A549 (cell line): ENCODE measurements at regions of chr5 and their contacts with region 1.

Region 1: GRCh38 chr5:42908509-42909488 is 97.1 kb upstream of the SELENOP start:
- DNase-seq: peak; percentile 83 to 89
- ATAC-seq: peak; percentile 87 to 94
- H3K4me3 ChIP-seq: peak overlapping the region; percentile 42
- H3K27ac ChIP-seq: peak overlapping the region; percentile 32 to 64; a peak in 4 of 6 replicates
- H3K4me1 ChIP-seq: peaks cover 4% of the 10 kb centered on the region; the same call in 1 of the 3 replicates
- CTCF ChIP-seq: peak; percentile 88
- EP300 ChIP-seq: no peak
- POLR2A ChIP-seq: no peak
- RAD21 ChIP-seq: peak; percentile 73 to 80

Region 2: GRCh38 chr5:42791151-42791550 is 117.6 kb before region 1 on chr5:
- CTCF ChIA-PET with region 1: no interaction called
- POLR2A ChIA-PET with region 1: no interaction called
- DNase-seq: no peak
- ATAC-seq: no peak
- H3K4me3 ChIP-seq: no peak overlapping the region
- H3K27ac ChIP-seq: no peak overlapping the region
- H3K4me1 ChIP-seq: no peaks in the 10 kb centered on the region
- CTCF ChIP-seq: no peak
- EP300 ChIP-seq: no peak
- POLR2A ChIP-seq: no peak
- RAD21 ChIP-seq: no peak

Region 3: DNA sequence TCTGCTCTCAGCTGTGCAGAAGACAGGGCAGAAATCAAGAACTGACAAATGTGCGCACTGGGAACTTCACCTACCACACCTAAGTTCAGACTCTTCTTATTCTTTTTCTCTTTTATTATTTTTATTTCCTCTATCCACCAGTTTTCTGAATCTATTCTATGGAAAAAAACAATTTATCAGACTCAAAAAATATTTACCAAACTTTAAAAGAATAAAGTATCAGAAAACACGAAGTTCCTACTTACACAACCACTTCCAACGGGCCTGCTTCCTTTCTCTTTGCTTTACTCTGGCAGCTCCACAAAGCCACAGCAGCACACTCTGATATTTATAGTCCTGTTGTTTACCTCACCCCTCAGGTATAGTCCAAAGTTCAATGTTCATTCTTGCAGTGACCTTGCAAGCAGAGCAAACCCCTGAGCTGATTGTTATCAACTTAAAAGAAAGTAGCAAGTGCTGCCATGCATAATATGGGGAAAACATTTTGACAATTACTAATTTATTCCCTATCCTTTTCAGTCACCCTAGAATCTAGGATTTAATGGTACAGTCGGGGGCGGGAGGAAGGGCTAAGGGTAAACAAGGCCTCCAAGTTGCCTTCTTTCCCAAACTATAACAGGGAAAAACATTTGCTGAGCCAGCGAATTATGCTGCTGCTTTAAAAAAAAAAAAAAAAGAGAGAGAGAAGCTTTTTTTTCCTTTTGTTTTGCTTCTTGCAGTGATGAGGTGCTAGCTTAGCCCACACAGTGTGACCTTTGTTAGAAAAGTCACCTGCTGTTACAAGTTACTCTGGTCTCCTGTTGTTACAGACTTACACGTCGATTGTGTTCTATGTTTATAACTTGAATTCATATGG is 97.0 kb before region 1 on chr5 and contains the start of gene SELENOP:
- CTCF ChIA-PET with region 1: no interaction called
- POLR2A ChIA-PET with region 1: no interaction called
- DNase-seq: peak in 1 of 2 experiments; percentile 23
- ATAC-seq: peak in 1 of 2 experiments; percentile 40; a peak in 3 of 6 replicates
- H3K4me3 ChIP-seq: no peak within 1 kb of the TSS
- H3K27ac ChIP-seq: no peak within 1 kb of the TSS
- H3K4me1 ChIP-seq: no peaks in the 10 kb centered on the region
- CTCF ChIP-seq: no peak
- EP300 ChIP-seq: no peak
- POLR2A ChIP-seq: no peak
- RAD21 ChIP-seq: no peak
- polyA plus RNA-seq, gene SELENOP: 0.96 and 1.0 TPM in 2 replicates

Region 4: GRCh38 chr5:42858031-42858643 is 50.7 kb before region 1 on chr5:
- CTCF ChIA-PET with region 1: no interaction called
- POLR2A ChIA-PET with region 1: no interaction called
- DNase-seq: no peak
- ATAC-seq: no peak
- H3K4me3 ChIP-seq: no peak overlapping the region
- H3K27ac ChIP-seq: no peak overlapping the region
- H3K4me1 ChIP-seq: no peaks in the 10 kb centered on the region
- CTCF ChIP-seq: no peak
- EP300 ChIP-seq: no peak
- POLR2A ChIP-seq: no peak
- RAD21 ChIP-seq: no peak

Region 5: GRCh38 chr5:42889311-42889933 is 19.4 kb before region 1 on chr5:
- CTCF ChIA-PET with region 1: interaction called, 17 read pairs
- POLR2A ChIA-PET with region 1: no interaction called
- DNase-seq: peak; percentile 62 to 79
- ATAC-seq: peak; percentile 95 to 98
- H3K4me3 ChIP-seq: no peak overlapping the region
- H3K27ac ChIP-seq: no peak overlapping the region
- H3K4me1 ChIP-seq: no peaks in the 10 kb centered on the region
- CTCF ChIP-seq: peak; percentile 87
- EP300 ChIP-seq: no peak
- POLR2A ChIP-seq: no peak
- RAD21 ChIP-seq: peak; percentile 82 to 95

Region 6: DNA sequence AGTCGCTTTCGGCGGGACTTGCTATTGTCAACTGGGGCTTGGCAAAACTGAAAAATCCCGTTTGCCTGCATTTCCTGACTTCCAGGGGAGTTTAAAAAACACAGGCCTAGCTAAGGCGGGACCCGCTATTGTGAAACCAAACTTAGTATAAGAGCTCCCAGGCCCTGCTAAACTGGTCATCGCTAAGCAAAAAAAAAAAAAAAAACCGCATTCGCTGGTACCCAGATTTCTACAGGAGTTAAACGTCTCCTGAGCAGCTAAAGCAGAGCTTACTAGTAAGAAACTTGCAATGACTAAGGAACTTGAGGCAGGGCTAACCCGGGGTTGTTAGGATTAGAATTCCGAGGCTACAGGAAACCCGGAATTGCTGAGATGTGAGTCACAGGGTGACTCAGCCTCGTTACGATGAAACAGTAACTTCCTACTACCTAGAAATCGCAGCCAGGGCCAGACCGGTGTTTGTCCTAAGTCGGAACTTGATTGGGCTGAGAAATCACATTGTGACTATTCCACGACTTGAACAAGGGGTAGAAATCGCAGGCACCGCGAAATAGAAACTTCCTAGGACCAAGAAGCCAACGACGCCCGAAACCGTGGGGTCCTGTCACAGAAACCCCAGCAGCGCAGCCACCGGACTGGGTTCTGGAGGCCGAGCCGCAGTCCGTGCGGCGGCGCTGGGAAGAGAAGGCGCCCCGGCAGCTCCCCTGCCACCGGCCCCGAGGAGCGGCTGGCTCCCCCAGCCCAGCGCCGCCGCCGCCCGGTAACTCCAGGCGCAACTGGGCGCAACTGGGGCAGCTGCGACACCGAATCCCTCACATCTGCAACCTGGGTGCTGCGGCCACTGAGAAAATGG is 41.9 kb after region 1 on chr5:
- CTCF ChIA-PET with region 1: interaction called, 82 read pairs
- POLR2A ChIA-PET with region 1: interaction called, 13 read pairs
- DNase-seq: peak; percentile 97 to 99
- ATAC-seq: peak; percentile 93 to 94
- H3K4me3 ChIP-seq: peak overlapping the region; percentile 37
- H3K27ac ChIP-seq: peak overlapping the region; percentile 95 to 99
- H3K4me1 ChIP-seq: peaks cover 19% of the 10 kb centered on the region
- CTCF ChIP-seq: no peak
- EP300 ChIP-seq: peak; percentile 51 to 63; a peak in 2 of 5 replicates
- POLR2A ChIP-seq: no peak
- RAD21 ChIP-seq: 0 out of 5 replicates have a peak, but pooled peaks of 1 of the 2 experiments have one; percentile 27

Region 7: GRCh38 chr5:42989190-42989589 is 80.4 kb after region 1 on chr5:
- CTCF ChIA-PET with region 1: interaction called, 132 read pairs
- POLR2A ChIA-PET with region 1: interaction called, 5 read pairs
- DNase-seq: no peak
- ATAC-seq: no peak
- H3K4me3 ChIP-seq: no peak overlapping the region
- H3K27ac ChIP-seq: 0 out of 6 replicates have a peak overlapping the region, but pooled peaks of 1 of the 2 experiments have one; percentile 0
- H3K4me1 ChIP-seq: peaks cover 35% of the 10 kb centered on the region
- CTCF ChIP-seq: no peak
- EP300 ChIP-seq: no peak
- POLR2A ChIP-seq: no peak
- RAD21 ChIP-seq: no peak

Region 8: DNA sequence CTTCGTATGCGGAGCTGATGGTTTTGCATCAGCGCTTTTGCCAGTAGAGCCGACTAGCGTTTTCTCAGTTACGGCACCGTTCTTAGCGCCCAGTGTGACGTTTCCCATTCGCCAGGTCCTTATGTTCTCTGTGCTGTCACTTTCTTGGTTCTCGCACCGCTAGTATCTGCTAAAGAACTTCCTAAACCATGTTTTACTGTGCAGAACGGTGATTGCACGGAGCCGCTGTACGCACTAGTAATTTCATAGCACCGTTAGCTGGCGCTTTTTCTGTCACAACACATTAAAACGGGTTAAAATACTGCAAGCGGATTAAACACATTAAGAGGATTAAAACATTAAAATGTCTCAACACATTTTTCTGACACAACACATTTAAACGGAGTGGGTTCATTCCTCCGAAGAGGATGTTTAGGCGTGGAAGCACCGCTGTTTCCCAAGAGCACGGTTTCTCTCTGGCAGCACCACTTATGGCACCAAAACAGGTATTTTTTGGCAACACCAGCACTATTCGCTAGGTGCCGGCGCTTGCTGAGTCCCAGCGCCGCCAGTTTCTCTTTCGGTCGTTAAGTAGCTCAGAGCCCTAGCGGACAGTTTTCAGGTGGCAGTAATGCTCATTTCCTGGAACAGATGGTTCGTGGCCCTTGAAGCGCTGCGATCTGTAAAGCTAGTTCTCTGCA is 111.0 kb after region 1 on chr5:
- CTCF ChIA-PET with region 1: interaction called, 53 read pairs
- POLR2A ChIA-PET with region 1: interaction called, 4 read pairs
- DNase-seq: peak; percentile 51 to 88
- ATAC-seq: peak; percentile 68
- H3K4me3 ChIP-seq: peak overlapping the region; percentile 55
- H3K27ac ChIP-seq: peak overlapping the region; percentile 90 to 96
- H3K4me1 ChIP-seq: peaks cover 24% of the 10 kb centered on the region
- CTCF ChIP-seq: no peak
- EP300 ChIP-seq: no peak
- POLR2A ChIP-seq: no peak
- RAD21 ChIP-seq: no peak

Region 9: DNA sequence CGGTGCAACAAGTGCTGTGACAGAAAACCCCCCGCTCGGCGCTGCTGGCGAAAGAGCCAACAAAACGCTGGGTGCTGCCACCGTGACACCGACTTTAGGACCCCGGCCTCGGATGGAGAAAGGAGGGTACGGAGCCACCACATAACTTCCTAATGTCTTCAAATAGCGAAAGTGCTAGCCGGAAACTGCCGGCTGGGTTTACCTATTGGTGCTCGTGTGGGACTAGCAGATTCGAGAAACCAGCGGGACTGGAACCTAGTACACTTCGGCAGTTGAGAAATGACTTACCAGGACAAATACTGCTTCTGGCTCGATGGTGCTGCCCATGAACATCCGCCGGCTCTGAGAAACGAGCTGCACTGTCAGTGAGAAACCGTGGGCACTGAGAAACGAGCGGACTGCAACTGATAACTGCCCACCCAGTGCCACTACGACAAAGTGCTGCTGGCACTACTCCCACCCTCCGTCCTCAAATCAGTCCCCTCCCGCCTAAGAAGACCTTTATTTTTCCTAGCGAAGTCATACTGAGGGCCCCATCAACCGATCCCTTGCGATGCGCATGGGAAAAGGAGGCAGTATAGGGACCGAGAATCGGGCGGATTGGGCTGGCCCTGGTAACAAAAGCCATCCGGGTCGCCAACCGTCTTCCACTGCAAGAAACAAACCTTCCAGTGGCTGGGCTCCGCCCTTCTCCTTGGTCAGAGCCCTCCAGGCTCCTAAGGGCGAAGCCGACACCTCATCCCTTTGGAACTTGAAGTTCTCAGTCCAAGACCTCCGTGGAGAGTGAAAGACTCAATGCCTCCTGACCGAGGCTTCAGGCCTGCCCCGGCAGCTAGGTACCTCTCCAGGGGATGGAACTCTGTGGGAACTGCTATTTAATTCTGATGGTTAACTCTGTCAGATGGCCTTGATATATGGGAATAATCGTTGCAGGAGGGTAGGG is 158.3 kb after region 1 on chr5:
- CTCF ChIA-PET with region 1: interaction called, 62 read pairs
- POLR2A ChIA-PET with region 1: interaction called, 9 read pairs
- DNase-seq: peak; percentile 59 to 93
- ATAC-seq: peak; percentile 69 to 78
- H3K4me3 ChIP-seq: peak overlapping the region; percentile 57
- H3K27ac ChIP-seq: peak overlapping the region; percentile 92 to 93
- H3K4me1 ChIP-seq: peaks cover 23% of the 10 kb centered on the region
- CTCF ChIP-seq: no peak
- EP300 ChIP-seq: no peak
- POLR2A ChIP-seq: no peak; the same call in none of the 2 replicates
- RAD21 ChIP-seq: no peak